ENCODE measurements at regions of chr5 and their contacts with region 1.

Region 1: GRCh38 chr5:133977161-133977787 is 8.8 kb upstream of the C5orf15 start:
- DNase-seq: no peak
- ATAC-seq: peak; percentile 54
- H3K4me3 Mint-ChIP-seq: no peak overlapping the region
- H3K27ac Mint-ChIP-seq: peak overlapping the region; percentile 68
- H3K4me1 Mint-ChIP-seq: peaks cover 29% of the 10 kb centered on the region
- H3K27me3 Mint-ChIP-seq: no peaks in the 10 kb centered on the region
- CTCF ChIP-seq: no peak

Region 2: DNA sequence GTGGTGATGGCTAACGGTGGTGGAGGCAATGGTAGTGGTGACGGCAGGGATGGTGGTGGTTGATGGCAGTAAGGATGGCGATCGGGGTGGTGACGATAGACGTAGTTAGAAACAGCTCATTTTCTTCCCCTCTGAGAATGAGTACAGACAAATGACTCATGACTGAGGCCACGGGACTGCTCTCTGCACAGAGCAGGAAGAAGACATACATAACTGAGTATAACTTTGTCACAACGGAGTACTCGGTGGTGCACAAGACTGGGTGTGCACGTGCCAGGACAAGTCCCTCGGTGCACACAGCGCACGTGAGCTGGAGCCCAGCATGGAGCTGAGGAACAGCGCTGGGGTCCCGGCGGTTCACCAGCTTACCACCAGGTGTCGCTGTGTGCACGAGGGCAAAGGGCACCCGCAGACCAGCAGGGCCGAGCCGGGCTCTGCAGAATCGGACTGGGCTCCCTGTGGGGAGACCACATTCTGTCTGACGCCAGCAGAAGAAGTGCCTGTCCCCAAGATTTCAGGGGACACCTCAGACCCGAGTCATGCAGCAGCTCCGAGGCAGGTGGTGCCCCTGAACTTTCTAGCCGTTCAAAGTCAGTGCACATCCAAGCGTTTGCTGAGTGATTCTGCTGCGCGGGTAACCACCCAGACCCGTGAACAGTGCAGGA is 553.5 kb before region 1 on chr5:
- CTCF ChIA-PET with region 1: interaction called, 11 read pairs
- POLR2A ChIA-PET with region 1: no interaction called
- intact Hi-C with region 1: loop called (anchors 10 kb)
- DNase-seq: peak; percentile 75
- ATAC-seq: peak; percentile 94
- H3K4me3 Mint-ChIP-seq: no peak overlapping the region
- H3K27ac Mint-ChIP-seq: peak overlapping the region; percentile 19
- H3K4me1 Mint-ChIP-seq: peaks cover 10% of the 10 kb centered on the region
- H3K27me3 Mint-ChIP-seq: peaks cover 3% of the 10 kb centered on the region
- CTCF ChIP-seq: peak; percentile 81

Region 3: DNA sequence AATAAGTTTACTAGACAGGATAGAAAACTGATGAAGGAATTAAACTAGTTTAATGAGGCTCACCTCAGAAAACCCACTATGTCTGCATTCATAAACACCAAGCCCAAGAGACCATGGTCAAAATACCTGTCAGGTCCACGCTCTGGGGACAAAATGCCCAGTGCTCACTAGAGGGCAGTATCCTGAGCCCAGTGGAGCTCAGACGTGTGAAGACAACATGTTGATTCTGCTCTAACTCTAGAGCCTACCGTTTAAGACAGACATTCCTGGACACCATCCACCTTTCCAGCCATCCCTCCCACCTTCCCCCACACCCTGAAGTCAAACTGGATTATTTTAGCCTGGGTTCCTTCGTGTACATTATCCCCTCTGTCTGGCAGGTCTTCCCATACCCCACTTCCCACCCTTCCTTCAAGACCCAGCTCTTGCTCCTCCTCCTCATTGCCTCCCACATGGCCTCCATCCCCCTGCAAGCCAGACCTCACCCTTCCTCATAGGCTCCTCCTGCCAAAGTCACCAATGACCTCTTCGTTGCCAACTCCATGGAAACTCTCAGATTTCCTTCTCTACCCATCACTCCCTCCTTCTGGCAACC is 222.6 kb before region 1 on chr5:
- CTCF ChIA-PET with region 1: no interaction called
- POLR2A ChIA-PET with region 1: no interaction called
- intact Hi-C with region 1: loop called (anchors 1 kb)
- DNase-seq: no peak
- ATAC-seq: peak; percentile 34
- H3K4me3 Mint-ChIP-seq: no peak overlapping the region
- H3K27ac Mint-ChIP-seq: no peak overlapping the region
- H3K4me1 Mint-ChIP-seq: no peaks in the 10 kb centered on the region
- H3K27me3 Mint-ChIP-seq: peaks cover 12% of the 10 kb centered on the region
- CTCF ChIP-seq: no peak

Region 4: DNA sequence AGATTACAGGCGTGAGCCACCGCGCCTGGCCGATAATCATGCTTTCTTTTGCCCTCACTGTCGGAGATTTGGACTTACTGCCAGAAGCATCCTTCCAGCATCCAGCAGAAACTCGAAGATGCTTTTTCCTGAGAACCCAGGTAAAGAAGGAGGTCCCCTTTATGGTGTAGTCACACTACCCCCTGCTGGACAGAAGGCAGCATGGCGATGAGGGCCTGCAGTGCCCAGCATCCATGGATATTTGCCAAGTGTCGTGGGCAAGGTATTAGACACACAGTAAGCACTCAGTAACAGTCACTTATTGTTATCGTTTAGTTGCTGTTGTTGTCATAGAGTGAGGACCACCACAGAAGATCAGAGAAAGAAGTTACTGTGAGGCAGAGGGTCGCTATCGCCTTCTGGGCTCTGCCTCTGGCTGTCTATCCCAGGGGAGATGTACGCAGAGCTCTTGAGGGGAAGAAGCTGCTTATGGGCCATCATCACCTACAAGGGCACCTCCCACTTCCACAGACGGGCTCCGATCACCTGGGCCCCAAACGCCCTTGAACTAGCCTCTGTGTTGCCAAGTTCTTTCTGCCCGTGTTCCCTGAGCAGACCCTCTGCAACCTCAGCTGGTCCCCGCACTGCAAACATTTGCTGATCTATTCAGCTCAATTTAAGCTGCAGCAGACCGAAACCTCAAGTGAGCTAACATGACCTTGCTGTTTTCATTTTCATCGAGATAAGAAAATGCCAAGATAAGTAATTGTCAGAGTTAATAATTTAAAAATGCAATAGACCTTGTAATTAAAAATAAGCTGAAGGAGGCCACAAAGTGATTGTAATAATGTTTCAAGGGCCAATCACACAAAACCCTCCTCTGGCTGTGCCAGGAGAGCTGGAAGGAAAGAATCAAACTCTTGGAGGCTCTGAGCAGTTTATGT is 32.8 kb before region 1 on chr5:
- CTCF ChIA-PET with region 1: interaction called, 12 read pairs
- POLR2A ChIA-PET with region 1: no interaction called
- intact Hi-C with region 1: no loop called
- DNase-seq: no peak
- ATAC-seq: peak; percentile 87
- H3K4me3 Mint-ChIP-seq: no peak overlapping the region
- H3K27ac Mint-ChIP-seq: no peak overlapping the region
- H3K4me1 Mint-ChIP-seq: peaks cover 44% of the 10 kb centered on the region
- H3K27me3 Mint-ChIP-seq: no peaks in the 10 kb centered on the region
- CTCF ChIP-seq: no peak

Region 5: DNA sequence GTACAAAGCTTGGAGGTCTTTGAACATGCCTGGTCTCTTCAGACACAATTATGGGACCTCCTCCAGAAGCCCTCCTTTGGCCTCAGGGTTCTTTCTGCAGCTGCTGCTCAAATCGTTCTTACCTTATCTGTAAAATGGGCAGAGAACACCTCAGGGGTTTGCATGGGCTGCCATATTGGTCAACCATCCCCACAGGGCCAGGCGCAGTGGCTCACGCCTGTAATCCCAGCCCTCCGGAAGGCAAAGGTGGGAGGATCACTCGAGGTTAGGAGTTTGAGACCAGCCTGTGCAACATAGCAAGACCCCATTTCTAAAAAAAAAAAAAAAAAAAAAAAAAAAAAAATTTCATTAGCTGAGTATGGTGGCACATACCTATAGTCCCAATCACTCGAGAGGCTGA is 108.1 kb after region 1 on chr5:
- CTCF ChIA-PET with region 1: no interaction called
- POLR2A ChIA-PET with region 1: interaction called, 11 read pairs
- intact Hi-C with region 1: no loop called
- DNase-seq: no peak
- ATAC-seq: no peak
- H3K4me3 Mint-ChIP-seq: no peak overlapping the region
- H3K27ac Mint-ChIP-seq: no peak overlapping the region
- H3K4me1 Mint-ChIP-seq: peaks cover 7% of the 10 kb centered on the region
- H3K27me3 Mint-ChIP-seq: peaks cover 2% of the 10 kb centered on the region
- CTCF ChIP-seq: no peak

Measured in activated B cell treated with CpG ODN at 0.5 μM for 24 hours (primary cell).